ENCODE measurements at regions of chr1 and their contacts with region 1.

Region 1: DNA sequence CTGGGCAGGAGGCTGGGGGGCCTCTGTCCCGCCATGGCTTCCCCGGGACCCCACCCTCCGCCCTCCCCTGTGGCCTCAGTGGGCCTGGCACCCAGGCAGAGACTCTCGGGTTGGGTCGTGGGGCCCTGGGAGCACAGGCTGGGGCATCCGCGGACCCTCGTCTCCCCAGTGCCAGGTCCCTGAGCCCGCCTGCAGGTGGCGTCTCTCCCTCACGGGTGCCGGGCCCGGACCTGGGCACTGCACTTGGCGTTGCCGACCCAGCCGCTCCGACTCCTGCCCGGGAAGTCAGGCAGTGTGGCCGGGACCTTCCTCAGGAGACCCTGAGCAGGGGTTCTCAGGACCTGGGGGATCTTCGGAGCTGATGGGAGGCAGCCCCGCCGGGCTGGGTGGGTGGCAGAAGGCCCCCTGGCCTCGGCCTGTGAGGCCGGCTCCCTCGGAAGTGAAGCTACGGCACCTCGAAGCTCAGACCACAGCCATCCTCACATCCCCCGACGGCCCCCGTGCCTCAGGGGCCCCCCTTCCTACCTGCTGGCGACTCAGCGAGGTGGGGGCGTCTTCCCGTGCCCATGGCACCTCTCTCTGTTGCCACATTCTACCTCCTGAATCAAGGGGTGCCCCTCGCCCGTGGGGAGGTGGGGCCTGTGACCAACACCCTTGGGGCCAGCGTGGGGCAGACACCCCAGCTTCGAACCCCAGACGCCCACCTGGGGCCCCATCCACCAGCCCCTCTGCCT is 6.4 kb upstream of the C1orf159 start:
- DNase-seq: peak; percentile 24
- ATAC-seq: peak; percentile 95
- H3K4me3 ChIP-seq: peak overlapping the region; percentile 18 to 36; a peak in 3 of 4 replicates
- H3K27ac ChIP-seq: peak overlapping the region; percentile 57; the same call in 1 of the 2 replicates
- H3K4me1 ChIP-seq: peaks cover 13% of the 10 kb centered on the region
- H3K27me3 ChIP-seq: no peaks in the 10 kb centered on the region
- CTCF ChIP-seq: peak; percentile 97

Region 2: DNA sequence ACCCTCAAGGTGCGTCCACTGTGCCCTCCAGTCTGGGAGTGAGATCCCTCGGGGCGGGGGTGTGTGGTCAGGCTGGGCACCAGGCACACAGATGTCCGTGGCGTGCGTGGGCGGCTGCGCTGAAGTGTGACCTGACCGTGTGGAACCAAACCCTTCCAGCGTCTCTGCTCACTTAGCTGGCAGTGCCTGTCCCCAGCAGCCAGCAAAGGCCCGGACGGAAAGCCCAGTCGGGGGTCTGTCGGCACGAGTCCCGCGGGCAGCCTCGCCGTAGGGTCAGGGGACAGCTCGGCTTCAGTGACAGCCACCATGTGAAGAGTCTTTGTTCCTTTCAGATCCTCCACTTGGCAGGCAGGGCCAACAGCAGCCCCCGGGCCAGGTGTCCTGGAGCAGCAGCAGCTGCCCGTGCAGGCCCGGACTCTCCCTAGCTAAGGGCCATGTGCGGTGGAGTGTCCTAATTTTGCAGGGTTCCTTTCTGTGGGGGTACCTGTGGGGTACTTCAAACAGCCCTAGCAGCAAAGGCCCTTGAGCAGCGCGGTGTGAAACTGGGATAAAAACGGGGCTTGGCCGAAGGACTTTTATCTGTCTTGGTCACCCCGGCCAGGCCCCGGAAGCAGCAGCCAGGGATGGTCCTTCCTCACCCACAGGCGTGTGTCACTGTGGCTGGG is 63.0 kb after region 1 on chr1:
- CTCF ChIA-PET with region 1: interaction called, 3 read pairs
- POLR2A ChIA-PET with region 1: no interaction called
- in situ Hi-C with region 1: no loop called
- intact Hi-C with region 1: loop called (anchors 10 kb)
- DNase-seq: no peak
- ATAC-seq: peak; percentile 31; the same call in 1 of the 2 replicates
- H3K4me3 ChIP-seq: no peak overlapping the region
- H3K27ac ChIP-seq: no peak overlapping the region
- H3K4me1 ChIP-seq: no peaks in the 10 kb centered on the region
- H3K27me3 ChIP-seq: no peaks in the 10 kb centered on the region
- CTCF ChIP-seq: no peak

Region 3: GRCh38 chr1:1231400-1232223 is 109.4 kb after region 1 on chr1 and contains the start of gene SDF4:
- CTCF ChIA-PET with region 1: interaction called, 10 read pairs
- POLR2A ChIA-PET with region 1: interaction called, 3 read pairs
- in situ Hi-C with region 1: no loop called
- intact Hi-C with region 1: loop called (anchors 5 kb)
- DNase-seq: peak; percentile 59
- ATAC-seq: peak; percentile 93
- H3K4me3 ChIP-seq: peak within 1 kb of the TSS; percentile 89 to 98
- H3K27ac ChIP-seq: peak within 1 kb of the TSS; percentile 98
- H3K4me1 ChIP-seq: peaks cover 30% of the 10 kb centered on the region
- H3K27me3 ChIP-seq: no peaks in the 10 kb centered on the region
- CTCF ChIP-seq: no peak
- total RNA-seq, gene SDF4: 335 TPM

Region 4: GRCh38 chr1:1250786-1251284 is 128.6 kb after region 1 on chr1:
- CTCF ChIA-PET with region 1: interaction called, 5 read pairs
- POLR2A ChIA-PET with region 1: no interaction called
- in situ Hi-C with region 1: no loop called
- intact Hi-C with region 1: loop called (anchors 5 kb)
- DNase-seq: no peak
- ATAC-seq: no peak
- H3K4me3 ChIP-seq: no peak overlapping the region
- H3K27ac ChIP-seq: no peak overlapping the region; the same call in 1 of the 2 replicates
- H3K4me1 ChIP-seq: peaks cover 19% of the 10 kb centered on the region
- H3K27me3 ChIP-seq: no peaks in the 10 kb centered on the region
- CTCF ChIP-seq: no peak